ENCODE measurements at regions of chr18 and their contacts with region 1.

Region 1: DNA sequence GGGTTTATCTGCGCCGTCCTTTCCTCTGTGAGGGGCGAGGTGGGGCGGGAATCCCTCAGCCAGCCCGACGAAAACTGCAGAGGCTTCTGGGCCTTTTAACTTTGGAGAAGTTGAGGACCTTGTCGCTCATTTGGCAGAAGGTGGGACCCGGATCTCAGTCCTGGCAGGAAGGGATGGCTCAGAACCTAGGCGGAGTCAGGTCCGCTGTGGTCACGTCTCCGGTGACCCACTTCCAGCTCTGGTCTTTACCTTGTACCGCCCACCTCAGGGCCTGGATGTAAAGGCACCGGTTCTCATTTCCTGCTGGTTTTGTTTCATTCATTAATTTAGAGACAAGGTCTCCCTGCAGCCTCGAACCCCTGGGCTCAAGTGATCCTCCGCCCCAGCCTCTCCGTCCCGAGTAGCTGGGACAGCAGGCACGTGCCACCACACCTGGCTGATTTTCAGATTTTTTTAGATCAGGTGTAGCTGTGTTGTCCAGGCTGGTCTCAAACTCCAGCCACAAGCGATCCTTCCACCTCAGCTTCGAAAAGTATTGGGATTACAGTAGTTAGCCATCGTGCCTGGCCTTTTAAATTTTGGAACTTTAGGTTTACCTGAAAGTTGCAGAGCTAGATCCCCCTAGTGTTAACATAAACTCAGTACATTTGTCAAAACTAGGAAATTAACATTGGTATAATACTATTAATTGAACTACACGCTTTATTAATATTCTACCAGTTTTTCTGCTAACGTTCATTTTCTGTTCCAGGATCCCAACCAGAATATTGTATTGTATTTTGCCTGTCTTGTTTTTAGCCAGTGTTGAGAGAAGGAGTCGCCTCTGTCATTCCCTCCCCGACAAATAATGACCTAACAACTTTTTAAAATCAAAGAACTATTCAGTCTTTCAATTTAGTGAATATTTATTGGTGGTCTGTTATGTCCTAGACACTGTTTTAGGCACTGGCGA is 852 bp downstream of the POLI start:
- DNase-seq: peak; percentile 30 to 74
- ATAC-seq: peak; percentile 86
- H3K4me3 ChIP-seq: peak overlapping the region; percentile 49
- H3K27ac ChIP-seq: peak overlapping the region; percentile 92 to 99
- H3K4me1 ChIP-seq: peaks cover 13% of the 10 kb centered on the region; the same call in 1 of the 3 replicates
- CTCF ChIP-seq: peak; percentile 44; the same call in 2 of the 3 replicates
- EP300 ChIP-seq: no peak
- POLR2A ChIP-seq: no peak; the same call in 1 of the 2 replicates
- RAD21 ChIP-seq: peak; percentile 44 to 50

Region 2: DNA sequence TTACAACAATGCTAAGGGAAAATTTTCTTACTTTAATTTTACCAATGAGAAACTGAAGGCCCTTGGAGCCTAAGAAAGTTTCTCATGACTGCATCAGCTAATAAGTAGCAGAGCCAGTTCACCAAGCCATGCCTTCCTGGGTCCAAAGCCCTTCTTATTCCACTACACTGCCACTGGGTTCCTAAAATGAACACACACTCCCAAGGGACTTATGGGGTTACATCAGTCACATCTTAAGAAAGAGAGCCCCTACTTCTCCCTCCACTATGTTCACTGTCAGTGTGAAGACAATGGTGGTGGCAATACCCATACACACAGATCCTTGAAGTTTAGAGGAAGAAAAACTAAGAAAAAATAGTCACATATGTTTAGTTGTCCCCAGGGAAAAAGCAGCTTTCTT is 66.3 kb before region 1 on chr18:
- CTCF ChIA-PET with region 1: no interaction called
- POLR2A ChIA-PET with region 1: no interaction called
- DNase-seq: no peak
- ATAC-seq: no peak
- H3K4me3 ChIP-seq: no peak overlapping the region
- H3K27ac ChIP-seq: no peak overlapping the region
- H3K4me1 ChIP-seq: peaks cover 11% of the 10 kb centered on the region; the same call in 2 of the 3 replicates
- CTCF ChIP-seq: no peak
- EP300 ChIP-seq: no peak
- POLR2A ChIP-seq: no peak
- RAD21 ChIP-seq: no peak

Region 3: DNA sequence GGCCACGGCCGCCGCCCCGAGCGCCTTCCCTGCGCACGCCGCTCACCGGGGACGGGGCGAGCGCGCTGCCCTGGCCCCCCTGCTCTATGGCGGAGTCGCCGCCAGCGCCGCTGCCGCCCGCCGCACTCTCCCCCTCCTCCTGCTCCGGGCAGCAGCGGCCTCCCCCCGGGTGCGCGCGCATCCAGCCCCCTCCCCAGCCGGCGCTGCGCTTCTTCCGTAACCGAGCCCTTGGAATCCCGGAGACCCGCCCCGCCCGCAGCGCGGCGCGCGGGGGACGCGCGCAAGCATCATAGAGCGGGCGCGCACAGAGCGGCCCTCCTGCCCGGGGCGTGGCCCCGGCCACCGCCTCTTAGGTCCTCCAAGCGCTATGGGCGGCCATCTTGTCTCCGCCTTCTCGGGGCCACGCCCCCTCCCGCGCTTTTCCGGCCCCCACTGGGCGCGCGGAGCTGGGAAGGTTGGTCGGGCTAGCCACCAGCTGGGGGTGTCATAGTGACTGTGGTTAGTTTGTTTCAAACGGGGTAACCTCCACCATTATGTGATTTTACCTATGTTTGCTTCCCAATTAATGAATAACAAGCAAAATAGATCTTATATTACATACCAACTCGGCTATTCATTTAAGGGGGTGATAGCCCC is 45.7 kb before region 1 on chr18 and contains the start of gene MBD2:
- CTCF ChIA-PET with region 1: interaction called, 9 read pairs
- POLR2A ChIA-PET with region 1: interaction called, 14 read pairs
- DNase-seq: peak; percentile 36 to 92
- ATAC-seq: peak; percentile 98 to 99
- H3K4me3 ChIP-seq: peak within 1 kb of the TSS; percentile 95
- H3K27ac ChIP-seq: peak within 1 kb of the TSS; percentile 87 to 100
- H3K4me1 ChIP-seq: peaks cover 26% of the 10 kb centered on the region; the same call in 2 of the 3 replicates
- CTCF ChIP-seq: no peak; the same call in 2 of the 3 replicates
- EP300 ChIP-seq: no peak
- POLR2A ChIP-seq: peak; percentile 44
- RAD21 ChIP-seq: 0 out of 5 replicates have a peak, but pooled peaks of 1 of the 2 experiments have one; percentile 18
- polyA plus RNA-seq, gene MBD2: 44.5 and 48.2 TPM in 2 replicates